Thyroid gland (tissue), 4 donors: ENCODE measurements at regions of chr3 and their contacts with region 1.

Region 1: DNA sequence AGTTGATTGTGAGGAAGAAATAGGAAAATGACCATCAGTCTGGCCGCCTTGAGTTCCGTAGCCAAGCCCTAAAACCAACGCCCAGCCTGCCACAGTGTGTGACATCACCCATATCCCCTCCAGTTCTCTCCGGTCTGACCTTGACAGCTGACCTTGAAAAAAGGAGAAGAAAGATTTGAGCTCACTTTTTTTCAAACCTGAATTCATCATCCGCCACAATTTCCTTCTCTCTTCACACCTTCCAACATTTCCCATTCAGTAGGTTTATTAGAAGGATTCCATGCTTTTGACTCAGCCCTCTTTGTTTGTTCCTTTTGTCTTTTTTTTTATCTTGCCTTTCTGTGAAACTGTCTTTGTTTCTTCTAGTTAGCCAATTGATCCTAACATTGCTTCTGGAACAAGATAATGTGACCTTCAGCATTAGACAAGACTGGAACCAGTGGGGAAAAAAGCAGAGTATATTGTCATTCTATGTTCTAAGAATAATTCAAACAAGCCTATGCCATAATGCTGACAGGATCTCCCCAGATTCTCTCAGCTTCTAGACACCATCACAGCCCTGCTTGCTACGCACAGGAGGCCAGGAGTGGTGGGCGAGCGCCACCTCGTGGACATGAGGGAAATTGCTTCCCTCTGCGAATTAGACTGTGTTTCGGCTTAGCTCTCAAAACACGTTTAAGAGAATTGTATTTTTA is 283.1 kb downstream of the FGF12 start:
- DNase-seq: peak; percentile 55 to 68
- H3K4me3 ChIP-seq: no peak overlapping the region
- H3K27ac ChIP-seq: no peak overlapping the region
- H3K4me1 ChIP-seq: no peaks in the 10 kb centered on the region
- H3K27me3 ChIP-seq: no peaks in the 10 kb centered on the region
- CTCF ChIP-seq: peak; percentile 93 to 99 (median 97)
- POLR2A ChIP-seq: no peak

Region 2: DNA sequence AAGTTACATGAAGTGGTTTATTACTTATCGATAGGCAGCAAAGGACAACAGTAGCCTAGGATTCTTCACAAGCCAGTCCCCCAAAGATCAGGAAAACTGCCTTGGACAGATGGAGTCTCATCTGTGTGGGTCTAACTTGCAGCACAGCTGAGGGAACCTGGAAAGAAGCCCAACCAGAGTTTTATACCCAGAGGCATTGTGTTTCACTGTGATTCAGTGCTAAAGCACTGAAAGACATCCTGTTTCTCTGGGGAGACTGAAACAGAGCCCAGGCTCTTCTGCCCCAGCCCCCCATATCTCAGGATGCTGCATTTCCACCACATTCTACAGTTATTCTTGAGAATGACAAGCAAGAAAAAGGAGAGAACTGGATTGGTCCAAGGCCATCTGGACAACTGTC is 1031.5 kb before region 1 on chr3:
- intact Hi-C with region 1: loop called (anchors 10 kb)
- DNase-seq: no peak
- H3K4me3 ChIP-seq: no peak overlapping the region
- H3K27ac ChIP-seq: no peak overlapping the region
- H3K4me1 ChIP-seq: peaks cover 0 to 4% of the 10 kb centered on the region in 2 donors
- H3K27me3 ChIP-seq: no peaks in the 10 kb centered on the region
- CTCF ChIP-seq: no peak
- POLR2A ChIP-seq: no peak